ENCODE measurements at regions of chr15 and their contacts with region 1.

Region 1: DNA sequence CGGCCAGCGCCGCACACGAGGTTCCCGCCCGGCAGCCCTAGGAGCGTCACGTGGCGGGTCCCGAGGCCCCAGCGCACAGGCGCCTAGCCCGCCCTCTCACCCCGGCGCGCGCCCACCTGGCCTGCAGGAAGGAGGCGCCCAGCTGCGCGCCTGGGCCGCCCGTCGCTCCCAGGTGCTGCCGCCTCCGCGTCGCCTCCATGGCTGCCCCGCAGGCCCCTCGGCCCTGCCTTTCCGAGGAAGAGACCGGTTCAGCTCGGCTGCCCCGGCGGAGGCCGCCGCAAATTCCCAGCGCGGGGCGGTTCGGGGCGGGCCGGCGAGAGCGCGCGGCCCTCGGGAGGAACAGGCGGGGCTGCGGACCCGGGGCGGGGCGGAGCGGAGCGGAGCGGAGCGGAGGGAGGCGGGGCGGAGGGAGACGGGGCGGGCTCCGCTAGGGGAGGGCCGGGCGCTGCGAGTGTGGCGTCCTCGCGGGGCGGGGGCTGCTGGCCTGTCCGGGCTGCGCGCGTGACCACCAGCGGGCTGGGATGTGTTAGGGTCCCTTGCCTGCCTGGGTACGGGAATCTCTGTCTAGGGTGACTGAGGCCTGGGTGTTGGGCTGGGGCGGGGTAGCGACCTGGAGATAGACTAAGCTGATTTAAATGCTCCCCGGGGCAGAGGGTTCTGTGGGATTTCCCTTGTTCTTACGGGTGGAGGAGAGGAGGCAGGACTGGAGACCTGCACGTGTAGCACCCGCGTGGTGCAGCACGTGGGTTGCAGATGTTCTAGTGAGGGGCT is at the start of gene CLN6:
- DNase-seq: peak; percentile 63 to 73 (median 65)
- H3K4me3 ChIP-seq: peak within 1 kb of the TSS; percentile 58 to 93 (median 78)
- H3K4me3 Mint-ChIP-seq: peak within 1 kb of the TSS; percentile 94
- H3K27ac ChIP-seq: peak within 1 kb of the TSS; percentile 30 to 73
- H3K27ac Mint-ChIP-seq: peak within 1 kb of the TSS; percentile 84 to 94 (median 89)
- H3K4me1 ChIP-seq: peaks cover 62 to 65% of the 10 kb centered on the region in 2 donors
- H3K4me1 Mint-ChIP-seq: peaks cover 51% of the 10 kb centered on the region
- H3K27me3 ChIP-seq: no peaks in the 10 kb centered on the region
- H3K27me3 Mint-ChIP-seq: peaks cover 0 to 4% (median 2%) of the 10 kb centered on the region in 3 donors
- CTCF ChIP-seq: no peak
- polyA plus RNA-seq, gene CLN6: 3.4 to 37.6 (median 4.2) TPM

Region 2: GRCh38 chr15:68053701-68054627 is 175.6 kb before region 1 on chr15 and contains the start of gene PIAS1:
- intact Hi-C with region 1: loop called in 1 of 2 experiments (anchors 10 kb)
- DNase-seq: peak; percentile 86 to 91 (median 91)
- H3K4me3 ChIP-seq: peak within 1 kb of the TSS; percentile 60 to 98 (median 98)
- H3K4me3 Mint-ChIP-seq: peak within 1 kb of the TSS; percentile 86 to 97
- H3K27ac ChIP-seq: peak within 1 kb of the TSS; percentile 88 to 89
- H3K27ac Mint-ChIP-seq: peak within 1 kb of the TSS; percentile 84 to 98 (median 95)
- H3K4me1 ChIP-seq: peaks cover 19 to 31% of the 10 kb centered on the region in 2 donors
- H3K4me1 Mint-ChIP-seq: peaks cover 49% of the 10 kb centered on the region
- H3K27me3 ChIP-seq: no peaks in the 10 kb centered on the region
- H3K27me3 Mint-ChIP-seq: no peaks in the 10 kb centered on the region
- CTCF ChIP-seq: no peak
- polyA plus RNA-seq, gene PIAS1: 47.3 to 109 (median 89.8) TPM

Region 3: GRCh38 chr15:68277603-68278344 is 48.2 kb after region 1 on chr15 and contains the start of gene FEM1B:
- intact Hi-C with region 1: loop called in 1 of 2 experiments (anchors 1 kb)
- DNase-seq: peak; percentile 85 to 91 (median 89)
- H3K4me3 ChIP-seq: peak within 1 kb of the TSS; percentile 75 to 92 (median 88)
- H3K4me3 Mint-ChIP-seq: peak within 1 kb of the TSS; percentile 91 to 98
- H3K27ac ChIP-seq: peak within 1 kb of the TSS; percentile 96 to 97
- H3K27ac Mint-ChIP-seq: peak within 1 kb of the TSS; percentile 96 to 99 (median 97)
- H3K4me1 ChIP-seq: peaks cover 48 to 56% of the 10 kb centered on the region in 2 donors
- H3K4me1 Mint-ChIP-seq: peaks cover 50% of the 10 kb centered on the region
- H3K27me3 ChIP-seq: no peaks in the 10 kb centered on the region
- H3K27me3 Mint-ChIP-seq: no peaks in the 10 kb centered on the region
- CTCF ChIP-seq: no peak
- polyA plus RNA-seq, gene FEM1B: 21.5 to 26.4 (median 26.0) TPM